Activated naive CD4-positive, alpha-beta T cell treated with anti-CD3 and anti-CD28 coated beads for 36 hours (primary cell): ENCODE measurements at regions of chr21 and their contacts with region 1.

Region 1: DNA sequence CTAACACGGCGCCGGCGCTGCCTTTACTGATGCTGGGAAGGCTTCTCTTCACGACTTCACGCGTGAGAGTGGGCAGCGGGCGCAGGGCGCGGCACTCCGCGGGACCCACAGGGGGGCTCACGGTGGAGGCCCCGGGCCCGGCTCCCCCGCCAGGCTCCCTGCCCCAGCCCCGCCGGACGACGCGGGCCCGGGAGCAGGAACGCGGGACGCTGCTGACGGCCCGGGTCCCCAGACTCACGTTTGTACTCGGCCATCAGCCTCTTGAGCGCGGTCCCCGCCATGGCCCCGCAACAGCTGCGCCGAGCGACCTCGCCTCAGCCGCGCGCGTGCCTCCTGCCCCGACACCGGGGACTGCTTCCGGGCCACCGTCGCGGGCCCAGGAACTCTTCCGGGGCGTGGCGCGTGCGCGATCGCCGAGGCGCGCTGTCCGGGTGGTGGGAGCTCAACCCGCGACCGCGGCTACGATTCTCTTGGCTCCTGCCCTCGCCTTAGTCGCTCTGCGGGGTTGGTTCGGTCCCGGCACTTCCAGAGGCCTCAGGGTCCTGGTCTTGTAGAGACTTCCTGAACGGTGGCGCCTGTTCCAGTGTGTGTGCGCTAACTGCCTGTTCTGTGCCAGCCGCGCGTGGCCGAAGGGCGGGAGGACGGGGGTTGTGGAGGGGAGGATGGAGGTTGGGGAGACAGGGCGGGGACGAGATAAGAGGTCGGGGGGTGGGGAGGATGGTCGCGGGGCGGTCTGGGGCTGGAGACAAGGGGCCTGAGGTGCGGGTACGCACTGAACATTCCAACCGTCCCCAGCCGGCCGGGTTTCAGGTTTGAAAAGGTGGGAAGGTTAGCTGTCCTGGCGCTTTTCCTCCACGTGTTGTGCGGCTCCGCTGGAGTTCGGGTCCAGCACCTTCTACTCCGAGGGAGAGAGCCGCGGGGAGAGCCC is at the start of gene UBE2G2:
- DNase-seq: peak; percentile 83
- H3K4me3 Mint-ChIP-seq: peak within 1 kb of the TSS; percentile 98
- H3K27ac Mint-ChIP-seq: peak within 1 kb of the TSS; percentile 83
- H3K4me1 Mint-ChIP-seq: peaks cover 58% of the 10 kb centered on the region
- H3K27me3 Mint-ChIP-seq: no peaks in the 10 kb centered on the region
- total RNA-seq, gene UBE2G2: 94.0 to 95.2 TPM

Region 2: GRCh38 chr21:44765231-44766013 is 36.3 kb before region 1 on chr21:
- CTCF ChIA-PET with region 1: no interaction called
- intact Hi-C with region 1: no loop called
- DNase-seq: peak; percentile 27
- H3K4me3 Mint-ChIP-seq: no peak overlapping the region
- H3K27ac Mint-ChIP-seq: peak overlapping the region; percentile 38
- H3K4me1 Mint-ChIP-seq: peaks cover 11% of the 10 kb centered on the region
- H3K27me3 Mint-ChIP-seq: no peaks in the 10 kb centered on the region

Region 3: DNA sequence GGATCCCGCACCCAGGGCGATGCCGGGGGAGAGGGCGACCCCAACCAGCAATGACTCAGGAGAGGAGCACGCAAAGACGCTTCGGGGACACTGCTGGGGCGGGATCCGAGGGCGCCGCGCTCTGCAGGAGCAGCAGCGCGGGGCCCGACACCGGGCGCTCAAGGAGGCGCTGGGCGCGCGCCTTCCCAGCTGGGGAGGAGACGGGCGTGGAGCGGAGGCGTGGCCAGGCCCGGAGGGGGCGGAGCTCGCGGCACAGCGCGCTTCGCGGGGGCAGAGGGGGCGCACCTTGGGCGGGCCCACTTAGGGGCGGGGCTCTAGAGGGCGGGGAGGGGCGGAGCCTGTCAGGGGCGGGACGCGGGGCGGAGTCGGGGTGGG is 15.8 kb after region 1 on chr21:
- CTCF ChIA-PET with region 1: interaction called, 4 read pairs
- intact Hi-C with region 1: loop called (anchors 1 kb)
- DNase-seq: peak; percentile 95
- H3K4me3 Mint-ChIP-seq: peak overlapping the region; percentile 65
- H3K27ac Mint-ChIP-seq: no peak overlapping the region
- H3K4me1 Mint-ChIP-seq: peaks cover 15% of the 10 kb centered on the region
- H3K27me3 Mint-ChIP-seq: no peaks in the 10 kb centered on the region